ENCODE measurements at regions of chrX and their contacts with region 1.

Region 1: DNA sequence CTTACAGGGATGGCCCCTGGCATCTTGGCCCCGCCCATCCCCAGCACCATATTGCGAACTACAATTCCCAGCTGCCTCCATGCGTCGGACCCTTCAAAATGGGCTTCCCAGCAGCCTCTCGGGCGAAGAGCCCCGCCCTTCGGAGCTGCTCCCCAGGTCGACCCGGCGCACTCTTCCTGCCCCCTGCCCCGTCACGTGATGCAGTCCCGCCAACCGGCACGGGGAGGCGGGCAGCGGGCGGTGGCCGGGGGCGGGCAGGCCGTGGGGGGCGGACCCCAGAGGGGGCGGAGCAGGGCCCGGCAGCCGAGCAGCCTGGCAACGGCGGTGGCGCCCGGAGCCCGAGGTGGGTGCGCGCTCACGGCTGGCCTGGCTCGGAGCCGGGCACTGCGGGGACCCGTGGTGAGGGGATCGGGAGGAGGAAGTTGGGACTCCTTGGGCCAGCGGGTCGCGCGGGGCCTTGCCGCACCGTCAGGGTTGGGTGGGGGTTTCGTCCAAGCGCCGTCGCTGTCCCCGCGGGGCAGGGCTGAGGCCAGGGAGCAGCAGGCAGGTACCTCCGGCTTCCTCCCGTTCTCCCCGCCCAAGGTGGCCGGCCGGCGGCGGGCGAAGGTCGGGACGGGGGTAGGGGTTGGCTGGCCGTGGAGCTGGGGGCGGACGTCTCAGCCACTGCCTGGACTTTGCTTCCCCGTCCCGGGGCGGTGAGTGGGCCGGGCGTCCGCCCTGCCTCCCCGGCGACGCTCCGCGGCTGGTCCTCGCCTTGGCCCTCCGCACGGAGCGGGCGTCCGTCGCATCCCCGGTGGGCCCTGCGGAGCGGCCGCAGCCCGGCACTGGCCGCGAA is at the start of gene MTM1:
- DNase-seq: peak; percentile 80 to 93 (median 90)
- ATAC-seq: peak; percentile 96
- H3K4me3 ChIP-seq: peak within 1 kb of the TSS; percentile 71
- H3K4me3 Mint-ChIP-seq: peak within 1 kb of the TSS; percentile 68 to 92 (median 90)
- H3K27ac ChIP-seq: peak within 1 kb of the TSS; percentile 75
- H3K27ac Mint-ChIP-seq: peak within 1 kb of the TSS; percentile 81 to 92 (median 89)
- H3K4me1 ChIP-seq: peaks cover 31 to 36% of the 10 kb centered on the region in 2 donors
- H3K4me1 Mint-ChIP-seq: peaks cover 6 to 45% (median 41%) of the 10 kb centered on the region in 7 donors
- H3K27me3 ChIP-seq: no peaks in the 10 kb centered on the region
- H3K27me3 Mint-ChIP-seq: no peaks in the 10 kb centered on the region
- total RNA-seq, gene MTM1: 21.8 to 34.7 (median 28.8) TPM

Region 2: GRCh38 chrX:149504915-149505651 is 1063.5 kb before region 1 on chrX and contains the start of gene IDS:
- CTCF ChIA-PET with region 1: no interaction called
- POLR2A ChIA-PET with region 1: no interaction called
- intact Hi-C with region 1: loop called in 1 of 2 experiments (anchors 1 kb)
- DNase-seq: peak; percentile 68 to 88 (median 81)
- ATAC-seq: peak; percentile 85
- H3K4me3 ChIP-seq: peak within 1 kb of the TSS; percentile 72
- H3K4me3 Mint-ChIP-seq: peak within 1 kb of the TSS; percentile 86 to 100 (median 91)
- H3K27ac ChIP-seq: peak within 1 kb of the TSS; percentile 98
- H3K27ac Mint-ChIP-seq: peak within 1 kb of the TSS; percentile 87 to 98 (median 94)
- H3K4me1 ChIP-seq: peaks cover 6 to 13% of the 10 kb centered on the region in 2 donors
- H3K4me1 Mint-ChIP-seq: peaks cover 14 to 42% (median 23%) of the 10 kb centered on the region in 7 donors
- H3K27me3 ChIP-seq: no peaks in the 10 kb centered on the region
- H3K27me3 Mint-ChIP-seq: peaks cover 0 to 8% (median 0%) of the 10 kb centered on the region in 5 donors
- total RNA-seq, gene IDS: 73.1 to 317 (median 133) TPM

Region 3: DNA sequence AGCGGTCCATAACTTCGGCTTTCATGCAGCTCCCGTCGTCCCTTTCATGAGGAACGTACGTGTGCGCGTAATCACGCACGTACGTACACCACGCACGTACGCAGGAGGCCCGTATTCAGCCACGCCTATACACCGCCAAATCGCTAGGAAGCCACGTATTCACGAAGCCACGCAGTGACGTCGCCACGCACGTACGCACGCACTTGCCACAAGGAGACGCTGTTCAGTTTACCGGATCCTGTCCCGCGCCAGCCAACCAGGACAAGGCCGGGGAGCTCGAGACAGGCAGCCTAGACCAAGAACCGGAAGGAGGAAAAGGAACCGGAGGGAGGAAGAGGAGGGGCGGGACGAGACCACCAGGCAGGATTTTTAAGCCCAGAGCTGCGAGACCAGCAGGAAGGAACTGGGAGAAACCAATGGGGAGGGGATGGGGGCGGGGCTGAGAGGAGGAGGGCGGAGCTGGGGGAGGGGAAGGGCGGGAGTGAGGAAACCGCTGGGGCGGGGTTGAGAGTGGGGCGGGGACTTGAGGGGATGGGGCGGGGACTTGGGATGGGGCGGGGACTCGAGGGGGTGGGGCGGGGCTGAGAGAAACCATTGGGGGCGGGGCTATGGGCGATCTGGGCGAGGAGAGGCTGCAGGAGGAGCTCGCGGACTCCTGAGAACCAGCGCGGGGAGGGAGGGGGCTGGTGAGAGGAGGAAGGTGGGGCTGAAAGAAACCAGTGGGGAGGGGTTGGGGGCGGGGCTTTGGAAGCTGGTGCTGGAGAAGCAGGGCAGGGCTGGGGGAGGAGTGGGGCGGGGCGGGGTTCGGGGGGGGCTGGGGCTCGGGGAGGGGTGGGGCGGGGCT is 629.9 kb before region 1 on chrX and contains the start of gene EOLA2:
- CTCF ChIA-PET with region 1: no interaction called
- POLR2A ChIA-PET with region 1: interaction called, 11 read pairs
- intact Hi-C with region 1: loop called in 1 of 2 experiments (anchors 10 kb)
- DNase-seq: peak; percentile 67 to 96 (median 92)
- ATAC-seq: peak; percentile 67
- H3K4me3 ChIP-seq: peak within 1 kb of the TSS; percentile 57
- H3K4me3 Mint-ChIP-seq: peak within 1 kb of the TSS; percentile 81 to 98 (median 92)
- H3K27ac ChIP-seq: peak within 1 kb of the TSS; percentile 90
- H3K27ac Mint-ChIP-seq: peak within 1 kb of the TSS; percentile 92 to 99 (median 99)
- H3K4me1 ChIP-seq: peaks cover 5% of the 10 kb centered on the region in 2 donors
- H3K4me1 Mint-ChIP-seq: peaks cover 0 to 7% (median 0%) of the 10 kb centered on the region in 7 donors
- H3K27me3 ChIP-seq: no peaks in the 10 kb centered on the region
- H3K27me3 Mint-ChIP-seq: no peaks in the 10 kb centered on the region
- total RNA-seq, gene EOLA2: 43.1 to 59.1 (median 45.4) TPM

Region 4: DNA sequence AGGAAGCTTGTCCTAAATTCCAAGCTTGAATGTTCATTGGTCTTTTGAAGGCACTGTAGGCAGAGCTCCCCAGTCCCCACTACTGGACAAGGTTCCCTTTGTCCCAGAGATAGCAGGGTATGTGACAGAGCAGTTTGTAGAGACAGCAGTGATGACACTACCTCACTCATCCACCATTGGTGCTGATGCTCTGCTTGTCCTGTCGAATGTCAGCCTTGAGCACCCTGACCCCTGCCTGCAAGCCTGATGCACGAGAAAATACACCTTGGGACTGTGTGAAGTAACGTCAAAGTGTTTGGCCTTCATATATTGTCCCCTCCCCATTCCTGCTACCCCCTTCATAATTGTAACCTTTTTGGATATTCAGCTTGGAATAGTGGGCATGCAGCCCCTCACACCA is 441.3 kb before region 1 on chrX:
- CTCF ChIA-PET with region 1: no interaction called
- POLR2A ChIA-PET with region 1: no interaction called
- intact Hi-C with region 1: no loop called
- DNase-seq: no peak
- ATAC-seq: no peak
- H3K4me3 ChIP-seq: no peak overlapping the region
- H3K4me3 Mint-ChIP-seq: no peak overlapping the region
- H3K27ac ChIP-seq: no peak overlapping the region
- H3K27ac Mint-ChIP-seq: no peak overlapping the region
- H3K4me1 ChIP-seq: no peaks in the 10 kb centered on the region
- H3K4me1 Mint-ChIP-seq: no peaks in the 10 kb centered on the region
- H3K27me3 ChIP-seq: no peaks in the 10 kb centered on the region
- H3K27me3 Mint-ChIP-seq: peaks cover 0 to 14% (median 3%) of the 10 kb centered on the region in 5 donors

Region 5: DNA sequence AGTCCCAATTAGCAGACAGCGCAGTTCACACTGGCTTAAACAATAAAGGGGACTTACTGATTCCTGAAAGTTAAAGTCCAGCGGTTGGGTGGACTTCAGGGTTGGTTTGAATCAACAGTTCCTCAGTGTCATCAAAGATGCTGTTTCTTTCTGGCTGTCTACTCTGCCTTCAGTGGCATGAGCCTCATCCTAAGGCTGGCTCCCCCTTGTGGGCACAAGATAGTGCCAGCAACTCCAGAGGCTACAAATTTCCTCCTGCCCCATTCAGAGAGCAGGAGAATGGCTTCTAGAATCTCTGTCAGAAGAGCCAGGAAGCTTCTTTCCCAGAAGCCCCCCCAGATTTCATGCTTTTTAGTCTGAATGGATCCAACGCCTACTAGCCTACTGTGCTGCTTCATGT is 82.5 kb before region 1 on chrX:
- CTCF ChIA-PET with region 1: no interaction called
- POLR2A ChIA-PET with region 1: no interaction called
- intact Hi-C with region 1: loop called in 1 of 2 experiments (anchors 5 kb)
- DNase-seq: peak in 8 of 9 donors; percentile 7 to 46 (median 34)
- ATAC-seq: peak; percentile 74
- H3K4me3 ChIP-seq: no peak overlapping the region
- H3K4me3 Mint-ChIP-seq: no peak overlapping the region
- H3K27ac ChIP-seq: no peak overlapping the region
- H3K27ac Mint-ChIP-seq: no peak overlapping the region
- H3K4me1 ChIP-seq: no peaks in the 10 kb centered on the region
- H3K4me1 Mint-ChIP-seq: peaks cover 0 to 48% (median 0%) of the 10 kb centered on the region in 7 donors
- H3K27me3 ChIP-seq: no peaks in the 10 kb centered on the region
- H3K27me3 Mint-ChIP-seq: no peaks in the 10 kb centered on the region

Region 6: GRCh38 chrX:150587585-150588503 is 19.3 kb after region 1 on chrX:
- CTCF ChIA-PET with region 1: interaction called, 7 read pairs
- POLR2A ChIA-PET with region 1: interaction called, 3 read pairs
- intact Hi-C with region 1: loop called (anchors 2 kb)
- DNase-seq: peak in 6 of 9 donors; percentile 16 to 53 (median 38)
- ATAC-seq: peak; percentile 55
- H3K4me3 ChIP-seq: no peak overlapping the region
- H3K4me3 Mint-ChIP-seq: no peak overlapping the region
- H3K27ac ChIP-seq: no peak overlapping the region
- H3K27ac Mint-ChIP-seq: no peak overlapping the region
- H3K4me1 ChIP-seq: no peaks in the 10 kb centered on the region
- H3K4me1 Mint-ChIP-seq: peaks cover 0 to 33% (median 25%) of the 10 kb centered on the region in 7 donors
- H3K27me3 ChIP-seq: no peaks in the 10 kb centered on the region
- H3K27me3 Mint-ChIP-seq: no peaks in the 10 kb centered on the region

Region 7: GRCh38 chrX:150635952-150636351 is 67.4 kb after region 1 on chrX:
- CTCF ChIA-PET with region 1: no interaction called
- POLR2A ChIA-PET with region 1: no interaction called
- intact Hi-C with region 1: no loop called
- DNase-seq: no peak
- ATAC-seq: no peak
- H3K4me3 ChIP-seq: no peak overlapping the region
- H3K4me3 Mint-ChIP-seq: no peak overlapping the region
- H3K27ac ChIP-seq: no peak overlapping the region
- H3K27ac Mint-ChIP-seq: peak overlapping the region in 1 of 9 donors; percentile 21
- H3K4me1 ChIP-seq: no peaks in the 10 kb centered on the region
- H3K4me1 Mint-ChIP-seq: peaks cover 0 to 8% (median 0%) of the 10 kb centered on the region in 7 donors
- H3K27me3 ChIP-seq: no peaks in the 10 kb centered on the region
- H3K27me3 Mint-ChIP-seq: no peaks in the 10 kb centered on the region